ENCODE measurements at regions of chr14 and their contacts with region 1.

Region 1: GRCh38 chr14:39984323-39984722 is 552.1 kb upstream of the FBXO33 start:
- DNase-seq: no peak
- ATAC-seq: no peak
- H3K4me3 ChIP-seq: no peak overlapping the region
- H3K27ac ChIP-seq: no peak overlapping the region
- H3K4me1 ChIP-seq: no peaks in the 10 kb centered on the region
- H3K27me3 ChIP-seq: no peaks in the 10 kb centered on the region
- CTCF ChIP-seq: no peak

Region 2: DNA sequence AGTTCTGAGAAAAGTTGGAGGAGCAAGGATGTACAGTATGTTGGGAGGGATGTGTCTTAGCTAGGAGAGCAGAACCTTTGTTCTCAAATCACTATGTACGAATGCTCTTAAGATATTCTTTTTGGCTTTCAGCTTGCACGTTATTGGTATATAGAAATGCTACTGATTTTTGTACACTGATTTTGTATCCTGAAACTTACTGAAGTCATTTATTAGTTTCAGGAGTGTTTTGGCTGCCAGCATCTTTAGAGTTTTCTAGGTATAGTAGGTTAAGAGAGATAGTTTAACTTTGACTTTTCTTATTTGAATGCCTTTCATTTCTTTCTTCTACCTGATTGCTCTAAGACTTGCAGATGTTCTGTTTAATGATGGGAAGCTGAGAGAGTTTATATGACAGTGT is 109.3 kb before region 1 on chr14:
- intact Hi-C with region 1: no loop called
- DNase-seq: no peak
- ATAC-seq: no peak
- H3K4me3 ChIP-seq: no peak overlapping the region
- H3K27ac ChIP-seq: no peak overlapping the region
- H3K4me1 ChIP-seq: no peaks in the 10 kb centered on the region
- H3K27me3 ChIP-seq: no peaks in the 10 kb centered on the region
- CTCF ChIP-seq: no peak

Region 3: GRCh38 chr14:39956372-39956771 is 28.0 kb before region 1 on chr14:
- intact Hi-C with region 1: loop called in 1 of 10 experiments (anchors 1 kb)
- DNase-seq: no peak
- ATAC-seq: no peak
- H3K4me3 ChIP-seq: no peak overlapping the region
- H3K27ac ChIP-seq: no peak overlapping the region
- H3K4me1 ChIP-seq: no peaks in the 10 kb centered on the region
- H3K27me3 ChIP-seq: no peaks in the 10 kb centered on the region
- CTCF ChIP-seq: no peak

Region 4: DNA sequence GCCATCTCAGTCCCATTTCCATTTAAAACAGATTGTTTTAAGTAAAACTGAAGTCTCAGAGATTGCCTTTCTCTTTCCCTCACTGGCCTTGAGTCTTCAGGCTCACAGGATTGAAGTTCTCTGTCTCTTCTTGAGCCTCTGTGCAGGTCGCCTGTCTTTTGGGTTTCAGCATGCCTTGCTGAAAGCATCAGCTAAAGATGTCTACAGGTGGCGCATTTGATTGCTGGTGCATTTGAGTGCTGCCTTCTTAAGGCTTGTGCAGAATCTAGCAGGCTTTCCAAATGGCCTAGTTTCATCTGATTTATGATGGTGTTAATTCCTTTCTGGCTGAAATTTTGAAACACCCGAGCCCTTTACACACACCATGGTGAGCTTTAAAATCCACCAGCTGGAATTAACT is 510.2 kb after region 1 on chr14:
- intact Hi-C with region 1: no loop called
- DNase-seq: no peak
- ATAC-seq: no peak
- H3K4me3 ChIP-seq: no peak overlapping the region
- H3K27ac ChIP-seq: no peak overlapping the region
- H3K4me1 ChIP-seq: no peaks in the 10 kb centered on the region
- H3K27me3 ChIP-seq: no peaks in the 10 kb centered on the region
- CTCF ChIP-seq: no peak

Measured in heart right ventricle (tissue), 16 donors.